A549 (cell line): ENCODE measurements at regions of chrX and their contacts with region 1.

Region 1: DNA sequence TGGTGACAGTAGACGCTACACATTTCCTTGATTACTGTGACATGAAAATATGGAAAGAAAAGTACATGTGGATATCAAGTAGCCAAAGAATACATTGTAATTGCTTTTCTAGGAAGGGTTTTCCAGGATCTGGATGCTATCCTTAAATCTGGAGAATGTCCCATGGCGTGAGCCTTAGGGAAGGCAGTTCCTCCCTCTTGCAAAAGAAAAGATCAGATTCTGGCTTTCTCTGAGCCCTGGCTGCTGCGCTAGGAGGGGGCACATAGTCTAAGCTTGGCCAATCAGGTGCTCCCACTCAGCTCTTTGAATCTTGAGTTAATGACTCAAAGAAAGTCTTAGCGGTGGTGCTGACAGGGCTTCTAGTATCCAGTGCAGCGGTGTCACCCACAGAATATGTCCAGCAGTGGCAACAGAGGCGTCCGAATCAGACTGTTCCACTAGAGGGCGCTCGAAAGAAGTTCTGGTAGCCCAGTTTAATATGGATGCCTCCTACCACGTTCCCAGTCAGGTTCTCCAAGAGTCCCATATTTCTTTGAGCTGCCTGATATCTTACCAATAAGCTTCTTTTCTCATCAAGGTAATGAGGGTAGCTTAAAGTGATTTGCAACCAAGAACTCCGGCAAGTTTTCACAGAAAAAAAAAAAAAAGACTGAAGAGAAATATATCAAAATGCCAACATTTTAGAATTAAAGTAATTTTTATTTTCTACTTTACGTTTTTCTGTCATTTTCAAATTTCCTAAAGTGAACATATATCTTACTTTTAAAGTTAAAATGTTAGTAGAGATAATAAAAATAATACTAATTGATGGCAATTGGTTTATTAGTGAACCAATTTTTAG is 213.4 kb upstream of the S100G start:
- DNase-seq: peak; percentile 35 to 70
- ATAC-seq: peak; percentile 98 to 100
- H3K4me3 ChIP-seq: no peak overlapping the region
- H3K27ac ChIP-seq: no peak overlapping the region
- H3K4me1 ChIP-seq: no peaks in the 10 kb centered on the region
- CTCF ChIP-seq: peak; percentile 69
- EP300 ChIP-seq: no peak
- POLR2A ChIP-seq: no peak
- RAD21 ChIP-seq: peak; percentile 52 to 56

Region 2: GRCh38 chrX:16368696-16369095 is 67.9 kb before region 1 on chrX:
- CTCF ChIA-PET with region 1: no interaction called
- POLR2A ChIA-PET with region 1: no interaction called
- DNase-seq: no peak
- ATAC-seq: no peak
- H3K4me3 ChIP-seq: no peak overlapping the region
- H3K27ac ChIP-seq: no peak overlapping the region
- H3K4me1 ChIP-seq: no peaks in the 10 kb centered on the region
- CTCF ChIP-seq: no peak
- EP300 ChIP-seq: no peak
- POLR2A ChIP-seq: no peak
- RAD21 ChIP-seq: no peak

Region 3: GRCh38 chrX:16664074-16664473 is 227.5 kb after region 1 on chrX:
- CTCF ChIA-PET with region 1: interaction called, 16 read pairs
- POLR2A ChIA-PET with region 1: no interaction called
- DNase-seq: no peak
- ATAC-seq: no peak
- H3K4me3 ChIP-seq: no peak overlapping the region
- H3K27ac ChIP-seq: no peak overlapping the region
- H3K4me1 ChIP-seq: no peaks in the 10 kb centered on the region; the same call in 2 of the 3 replicates
- CTCF ChIP-seq: no peak
- EP300 ChIP-seq: no peak
- POLR2A ChIP-seq: no peak
- RAD21 ChIP-seq: 0 out of 5 replicates have a peak, but pooled peaks of 1 of the 2 experiments have one; percentile 8

Region 4: GRCh38 chrX:16670998-16671397 is 234.4 kb after region 1 on chrX:
- CTCF ChIA-PET with region 1: interaction called, 16 read pairs
- POLR2A ChIA-PET with region 1: no interaction called
- DNase-seq: peak; percentile 42 to 43
- ATAC-seq: peak; percentile 61 to 70; a peak in 5 of 6 replicates
- H3K4me3 ChIP-seq: no peak overlapping the region
- H3K27ac ChIP-seq: no peak overlapping the region
- H3K4me1 ChIP-seq: no peaks in the 10 kb centered on the region
- CTCF ChIP-seq: peak; percentile 47; the same call in 2 of the 3 replicates
- EP300 ChIP-seq: no peak
- POLR2A ChIP-seq: no peak
- RAD21 ChIP-seq: peak; percentile 62 to 68